CD4-positive, alpha-beta T cell (primary cell): ENCODE measurements at regions of chr22 and their contacts with region 1.

Region 1: GRCh38 chr22:21629262-21630149 is at the start of gene YDJC:
- DNase-seq: peak; percentile 90 to 98 (median 94)
- ATAC-seq: peak; percentile 81
- H3K4me3 ChIP-seq: peak within 1 kb of the TSS; percentile 97
- H3K4me3 Mint-ChIP-seq: peak within 1 kb of the TSS; percentile 97
- H3K27ac ChIP-seq: peak within 1 kb of the TSS; percentile 87 to 96
- H3K27ac Mint-ChIP-seq: peak within 1 kb of the TSS; percentile 88
- H3K4me1 ChIP-seq: peaks cover 61% of the 10 kb centered on the region
- H3K4me1 Mint-ChIP-seq: peaks cover 50% of the 10 kb centered on the region
- H3K27me3 ChIP-seq: no peaks in the 10 kb centered on the region
- H3K27me3 Mint-ChIP-seq: no peaks in the 10 kb centered on the region
- CTCF ChIP-seq: no peak
- total RNA-seq, gene YDJC: 23.9 to 25.2 TPM

Region 2: DNA sequence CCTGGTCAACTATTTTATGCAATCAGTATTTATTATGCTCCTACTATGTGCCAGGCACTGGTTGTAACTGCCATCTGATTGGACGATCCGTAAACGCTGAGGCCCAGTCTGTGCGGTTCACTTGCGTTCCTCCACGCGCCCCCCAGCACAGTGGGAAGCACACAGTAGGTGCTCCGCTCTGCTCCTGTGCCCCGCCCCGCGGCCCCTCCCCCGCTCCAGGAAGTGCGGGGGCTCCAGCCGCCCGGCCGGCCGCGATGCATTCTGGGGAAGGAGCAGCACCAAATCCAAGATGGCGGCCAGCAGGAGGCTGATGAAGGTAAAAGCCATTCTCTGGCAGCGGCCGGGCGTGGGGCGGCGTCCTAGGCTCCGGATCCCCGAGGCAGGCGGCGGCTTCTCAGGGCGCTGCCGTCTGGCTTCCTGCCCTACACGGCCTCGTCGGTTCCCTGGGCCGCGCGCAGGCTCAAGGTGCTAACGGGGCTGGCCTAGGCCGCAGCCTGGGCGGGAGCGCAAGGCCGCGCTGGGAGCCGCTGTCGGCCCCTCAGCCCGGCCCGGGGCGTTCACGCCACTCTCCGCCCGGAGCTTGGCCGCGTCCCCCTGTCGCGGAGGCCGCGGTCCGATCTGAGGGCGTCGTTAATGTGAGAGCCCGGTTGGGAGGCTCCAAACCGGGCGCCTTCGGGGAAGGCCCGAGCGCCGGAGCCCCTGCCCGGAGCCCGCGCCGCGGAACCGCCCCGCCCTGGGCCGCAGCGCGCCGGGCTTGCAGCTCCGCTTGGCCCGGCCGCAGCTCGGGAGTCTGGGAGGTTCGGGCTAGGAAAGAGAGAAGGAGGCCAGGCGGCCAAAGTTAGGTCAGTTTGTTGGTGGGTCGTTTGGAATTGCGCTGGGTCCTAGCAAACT is 61.8 kb before region 1 on chr22 and contains the start of gene UBE2L3:
- CTCF ChIA-PET with region 1: interaction called, 9 read pairs
- POLR2A ChIA-PET with region 1: interaction called, 15 read pairs
- intact Hi-C with region 1: loop called in 1 of 2 experiments (anchors 2 kb)
- DNase-seq: peak; percentile 71 to 91 (median 79)
- ATAC-seq: peak; percentile 85
- H3K4me3 ChIP-seq: peak within 1 kb of the TSS; percentile 73
- H3K4me3 Mint-ChIP-seq: peak within 1 kb of the TSS; percentile 90
- H3K27ac ChIP-seq: peak within 1 kb of the TSS; percentile 53 to 59
- H3K27ac Mint-ChIP-seq: peak within 1 kb of the TSS; percentile 93
- H3K4me1 ChIP-seq: peaks cover 47% of the 10 kb centered on the region
- H3K4me1 Mint-ChIP-seq: peaks cover 44% of the 10 kb centered on the region
- H3K27me3 ChIP-seq: no peaks in the 10 kb centered on the region
- H3K27me3 Mint-ChIP-seq: no peaks in the 10 kb centered on the region
- CTCF ChIP-seq: no peak
- total RNA-seq, gene UBE2L3: 18.7 TPM

Region 3: DNA sequence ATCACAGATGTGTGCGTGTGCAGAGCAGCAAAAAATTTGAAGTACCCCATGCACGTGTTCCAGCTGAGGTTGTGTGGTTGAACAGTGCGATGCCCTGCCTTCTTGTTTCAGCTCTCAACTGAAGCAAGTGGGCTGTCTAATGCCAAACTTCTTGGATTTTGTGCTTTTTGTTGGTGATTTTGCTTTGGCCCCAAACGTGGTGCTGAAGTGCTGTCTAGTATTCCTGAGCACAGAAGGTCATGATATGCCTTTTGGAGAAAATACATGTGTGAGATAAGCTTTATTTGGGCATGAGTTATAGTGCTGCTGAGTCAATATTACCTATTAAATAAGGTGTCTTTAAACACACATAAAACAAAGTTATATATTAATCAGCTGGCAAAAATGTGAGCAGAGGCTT is 13.8 kb before region 1 on chr22:
- CTCF ChIA-PET with region 1: interaction called, 14 read pairs
- POLR2A ChIA-PET with region 1: interaction called, 7 read pairs
- intact Hi-C with region 1: no loop called
- DNase-seq: no peak
- ATAC-seq: no peak
- H3K4me3 ChIP-seq: no peak overlapping the region
- H3K4me3 Mint-ChIP-seq: no peak overlapping the region
- H3K27ac ChIP-seq: no peak overlapping the region
- H3K27ac Mint-ChIP-seq: peak overlapping the region; percentile 27
- H3K4me1 ChIP-seq: peaks cover 7% of the 10 kb centered on the region
- H3K4me1 Mint-ChIP-seq: peaks cover 19% of the 10 kb centered on the region
- H3K27me3 ChIP-seq: no peaks in the 10 kb centered on the region
- H3K27me3 Mint-ChIP-seq: no peaks in the 10 kb centered on the region
- CTCF ChIP-seq: no peak

Region 4: GRCh38 chr22:21652010-21652546 is 22.6 kb after region 1 on chr22:
- CTCF ChIA-PET with region 1: interaction called, 40 read pairs
- POLR2A ChIA-PET with region 1: interaction called, 21 read pairs
- intact Hi-C with region 1: no loop called
- DNase-seq: peak; percentile 61 to 89 (median 74)
- ATAC-seq: peak; percentile 98
- H3K4me3 ChIP-seq: peak overlapping the region; percentile 65
- H3K4me3 Mint-ChIP-seq: peak overlapping the region; percentile 87
- H3K27ac ChIP-seq: no peak overlapping the region
- H3K27ac Mint-ChIP-seq: no peak overlapping the region
- H3K4me1 ChIP-seq: peaks cover 32% of the 10 kb centered on the region
- H3K4me1 Mint-ChIP-seq: peaks cover 33% of the 10 kb centered on the region
- H3K27me3 ChIP-seq: no peaks in the 10 kb centered on the region
- H3K27me3 Mint-ChIP-seq: no peaks in the 10 kb centered on the region
- CTCF ChIP-seq: no peak

Region 5: DNA sequence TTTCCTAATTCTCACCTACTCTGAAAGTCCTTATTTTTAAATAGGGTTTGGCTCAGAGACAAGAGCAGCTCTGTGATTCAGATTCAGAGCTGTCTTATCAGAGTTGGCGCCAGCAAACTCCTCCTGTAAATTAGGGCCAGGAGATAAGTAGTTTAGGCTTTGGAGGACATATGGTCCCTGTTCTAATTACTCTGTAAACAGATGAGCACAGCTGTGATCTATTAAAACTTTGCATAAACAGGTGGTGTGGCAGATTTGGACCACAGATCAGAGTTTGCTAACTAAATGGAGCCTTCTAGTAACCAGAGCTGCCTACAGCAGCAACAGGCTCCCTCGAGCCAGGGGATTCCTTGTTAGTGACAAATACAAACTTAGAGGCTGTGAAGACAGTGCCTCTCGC is 78.2 kb after region 1 on chr22:
- CTCF ChIA-PET with region 1: no interaction called
- POLR2A ChIA-PET with region 1: no interaction called
- intact Hi-C with region 1: no loop called
- DNase-seq: no peak
- ATAC-seq: no peak
- H3K4me3 ChIP-seq: no peak overlapping the region
- H3K4me3 Mint-ChIP-seq: no peak overlapping the region
- H3K27ac ChIP-seq: no peak overlapping the region
- H3K27ac Mint-ChIP-seq: no peak overlapping the region
- H3K4me1 ChIP-seq: no peaks in the 10 kb centered on the region
- H3K4me1 Mint-ChIP-seq: no peaks in the 10 kb centered on the region
- H3K27me3 ChIP-seq: no peaks in the 10 kb centered on the region
- H3K27me3 Mint-ChIP-seq: no peaks in the 10 kb centered on the region
- CTCF ChIP-seq: no peak

Region 6: GRCh38 chr22:21735200-21736076 is 105.9 kb after region 1 on chr22 and contains the start of gene YPEL1:
- CTCF ChIA-PET with region 1: interaction called, 4 read pairs
- POLR2A ChIA-PET with region 1: interaction called, 10 read pairs
- intact Hi-C with region 1: no loop called
- DNase-seq: peak; percentile 91 to 99 (median 96)
- ATAC-seq: peak; percentile 94
- H3K4me3 ChIP-seq: peak within 1 kb of the TSS; percentile 56
- H3K4me3 Mint-ChIP-seq: peak within 1 kb of the TSS; percentile 80
- H3K27ac ChIP-seq: peak within 1 kb of the TSS; percentile 57 to 59
- H3K27ac Mint-ChIP-seq: peak within 1 kb of the TSS; percentile 79
- H3K4me1 ChIP-seq: peaks cover 23% of the 10 kb centered on the region
- H3K4me1 Mint-ChIP-seq: peaks cover 14% of the 10 kb centered on the region
- H3K27me3 ChIP-seq: no peaks in the 10 kb centered on the region
- H3K27me3 Mint-ChIP-seq: no peaks in the 10 kb centered on the region
- CTCF ChIP-seq: no peak
- total RNA-seq, gene YPEL1: 2.3 to 2.6 TPM